ENCODE measurements at regions of chr1 and their contacts with region 1.

Region 1: DNA sequence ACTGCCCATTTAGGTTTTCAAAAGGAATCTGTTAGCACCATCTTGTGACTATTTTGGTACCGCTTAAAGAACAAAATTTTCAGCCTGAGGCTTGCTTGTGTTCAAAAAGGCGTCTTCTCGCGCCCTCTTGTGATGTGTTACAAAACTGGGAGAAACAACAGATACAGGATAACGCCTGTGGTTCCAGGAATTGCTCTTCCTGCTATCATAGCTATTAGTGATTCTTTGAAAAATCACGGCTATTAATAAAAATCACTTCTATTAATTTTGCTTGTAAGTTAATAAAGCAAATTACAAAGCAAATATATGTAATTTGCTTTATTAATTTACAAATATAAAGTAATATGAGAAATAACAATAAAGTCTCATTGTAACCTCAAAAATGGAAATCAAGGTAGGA is 82.2 kb upstream of the ABCD3 start:
- DNase-seq: peak; percentile 60
- ATAC-seq: peak; percentile 60
- H3K4me3 Mint-ChIP-seq: no peak overlapping the region
- H3K27ac Mint-ChIP-seq: no peak overlapping the region
- H3K4me1 Mint-ChIP-seq: peaks cover 13% of the 10 kb centered on the region
- H3K27me3 Mint-ChIP-seq: peaks cover 5% of the 10 kb centered on the region

Region 2: DNA sequence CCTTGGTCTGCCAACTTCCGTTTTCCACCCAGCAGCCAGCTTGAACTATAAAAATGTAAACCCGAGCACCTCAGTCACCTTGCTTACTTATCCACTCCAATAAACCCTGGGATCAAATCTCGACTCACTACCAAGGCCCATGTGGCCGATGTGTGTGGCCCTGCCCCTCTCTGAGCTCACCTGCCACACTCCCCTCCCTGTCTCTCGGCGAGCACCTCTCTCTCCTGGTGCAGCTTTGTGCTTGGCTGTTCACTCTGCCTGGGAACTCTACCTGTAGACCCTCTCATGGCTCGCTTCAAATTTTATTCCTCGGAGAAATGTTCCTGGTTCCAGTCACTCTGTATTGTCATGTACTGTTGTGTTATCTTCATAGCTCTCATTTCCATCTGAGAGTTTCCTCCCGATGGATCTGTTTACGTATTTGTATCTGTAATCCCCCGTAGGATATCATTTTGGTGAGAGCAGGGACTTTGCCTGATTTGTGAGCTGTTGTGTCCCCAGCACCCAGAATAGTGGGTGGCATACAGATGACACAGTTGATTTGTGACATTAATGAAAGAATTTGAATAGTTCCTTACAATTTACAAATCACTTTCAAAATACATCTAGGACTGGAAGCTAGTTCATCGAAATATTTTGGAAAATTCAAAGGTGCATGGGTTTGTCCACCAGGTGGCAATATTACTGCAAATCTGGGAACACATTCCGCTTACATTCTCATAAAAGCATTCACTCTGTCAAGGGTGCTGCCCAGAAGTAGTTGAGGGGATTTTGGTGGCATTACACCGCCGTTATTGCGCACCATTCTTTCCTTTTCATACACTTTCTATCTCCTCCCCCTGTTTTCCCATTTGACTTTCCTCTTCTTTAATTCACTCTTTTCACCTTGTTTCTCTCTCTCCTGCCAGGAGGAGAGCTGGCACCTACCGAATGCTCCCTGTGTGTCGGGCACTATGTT is 310.3 kb before region 1 on chr1:
- CTCF ChIA-PET with region 1: interaction called, 27 read pairs
- POLR2A ChIA-PET with region 1: no interaction called
- intact Hi-C with region 1: loop called in 1 of 2 experiments (anchors 5 kb)
- DNase-seq: no peak
- ATAC-seq: peak; percentile 30
- H3K4me3 Mint-ChIP-seq: no peak overlapping the region
- H3K27ac Mint-ChIP-seq: peak overlapping the region; percentile 44
- H3K4me1 Mint-ChIP-seq: peaks cover 2% of the 10 kb centered on the region
- H3K27me3 Mint-ChIP-seq: peaks cover 4% of the 10 kb centered on the region

Region 3: GRCh38 chr1:94045465-94046056 is 290.4 kb before region 1 on chr1:
- CTCF ChIA-PET with region 1: interaction called, 56 read pairs
- POLR2A ChIA-PET with region 1: no interaction called
- intact Hi-C with region 1: loop called (anchors 1 to 5 kb)
- DNase-seq: peak; percentile 69
- ATAC-seq: peak; percentile 85
- H3K4me3 Mint-ChIP-seq: peak overlapping the region; percentile 36
- H3K27ac Mint-ChIP-seq: no peak overlapping the region
- H3K4me1 Mint-ChIP-seq: peaks cover 2% of the 10 kb centered on the region
- H3K27me3 Mint-ChIP-seq: peaks cover 5% of the 10 kb centered on the region

Region 4: DNA sequence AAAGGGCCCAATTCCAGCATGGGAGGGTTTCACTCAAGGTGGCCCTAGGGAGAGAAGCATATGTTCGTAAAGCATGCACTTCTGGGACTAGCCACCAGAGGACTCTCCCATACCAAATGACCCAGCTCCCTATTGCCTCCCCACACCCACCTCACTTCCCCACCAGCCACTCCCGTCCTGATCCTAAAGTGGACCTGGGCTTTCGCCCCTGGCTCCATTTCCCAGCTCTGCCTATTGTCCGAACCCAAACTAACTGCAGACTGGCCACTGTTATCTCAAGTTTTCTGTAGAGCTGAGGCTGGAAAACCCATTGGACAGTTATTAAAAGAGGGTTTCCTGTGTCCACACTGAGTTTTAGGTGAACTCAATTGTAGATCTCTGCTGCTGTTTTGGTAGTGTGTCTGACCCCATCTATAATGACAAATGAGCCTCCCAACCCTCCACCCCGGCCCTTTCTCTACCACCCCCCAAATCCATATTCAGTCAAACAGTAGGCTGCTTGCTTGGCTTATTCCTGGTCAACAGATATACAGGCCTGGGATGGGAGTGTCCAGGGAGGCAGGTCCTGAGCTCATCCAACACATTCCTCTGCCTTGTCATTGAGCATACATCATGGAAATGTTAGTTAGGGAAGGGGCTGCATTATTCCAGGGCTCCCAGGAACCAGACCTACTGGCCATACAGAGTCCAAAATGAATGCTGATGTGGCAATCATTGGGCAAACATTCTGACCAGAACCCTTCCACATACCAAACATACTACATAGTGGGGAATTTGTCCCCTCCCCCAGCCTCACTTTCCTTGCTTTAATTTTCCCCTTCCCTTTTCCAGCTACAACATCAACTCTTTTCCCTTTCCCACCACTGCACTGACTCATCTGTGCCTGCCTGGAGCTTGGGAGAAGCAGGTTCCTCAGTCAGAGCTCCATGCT is 274.2 kb before region 1 on chr1:
- CTCF ChIA-PET with region 1: interaction called, 20 read pairs
- POLR2A ChIA-PET with region 1: interaction called, 4 read pairs
- intact Hi-C with region 1: loop called (anchors 1 kb)
- DNase-seq: peak; percentile 64
- ATAC-seq: no peak
- H3K4me3 Mint-ChIP-seq: no peak overlapping the region
- H3K27ac Mint-ChIP-seq: no peak overlapping the region
- H3K4me1 Mint-ChIP-seq: no peaks in the 10 kb centered on the region
- H3K27me3 Mint-ChIP-seq: peaks cover 9% of the 10 kb centered on the region

Region 5: DNA sequence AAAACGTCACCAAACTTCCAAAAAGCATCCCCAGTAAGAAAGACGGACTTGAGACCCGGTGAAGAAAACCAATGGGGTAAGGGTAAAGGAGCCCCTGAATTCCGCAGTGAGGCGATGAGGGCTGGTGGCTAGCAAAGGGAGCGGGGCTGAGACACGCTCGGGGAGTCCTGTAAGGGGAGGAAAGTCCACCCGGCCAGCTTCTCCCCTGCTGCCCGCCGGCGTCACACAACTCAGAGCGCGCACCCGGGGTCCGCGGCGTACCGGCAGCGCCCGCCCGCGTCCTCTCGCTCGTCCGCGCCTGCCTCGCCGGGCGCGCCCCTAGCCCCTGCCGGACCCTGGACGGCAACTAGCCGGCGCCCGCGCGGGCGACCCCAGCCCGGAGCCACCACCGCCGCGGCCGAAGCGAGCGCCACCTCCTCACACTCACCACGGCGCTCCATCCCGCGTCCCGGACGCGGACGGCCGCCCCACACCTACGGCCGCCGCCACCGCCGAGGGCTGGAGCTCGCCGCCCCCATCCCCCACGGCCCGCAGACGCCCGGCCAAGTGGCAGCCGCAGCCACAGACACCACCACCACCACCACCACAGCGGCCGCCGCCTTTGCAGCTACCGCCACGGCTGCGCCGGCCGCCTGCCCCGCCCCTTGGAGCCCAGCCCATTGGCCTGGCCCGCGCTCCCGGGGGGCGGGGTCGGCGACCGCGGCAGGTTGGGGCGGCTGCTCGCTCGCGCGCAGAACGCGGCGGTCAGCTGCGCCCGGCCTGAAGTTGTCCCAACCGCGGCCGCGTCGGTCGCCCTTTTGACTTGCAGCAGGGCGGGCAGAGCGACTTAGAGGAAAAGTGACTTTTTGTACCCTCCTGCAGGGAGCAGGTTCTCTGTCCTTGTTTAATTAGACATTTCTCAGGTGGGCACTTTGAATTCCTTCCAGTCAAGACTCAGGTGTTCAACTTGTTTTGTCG is 88.5 kb before region 1 on chr1:
- CTCF ChIA-PET with region 1: no interaction called
- POLR2A ChIA-PET with region 1: no interaction called
- intact Hi-C with region 1: loop called in 1 of 2 experiments (anchors 10 kb)
- DNase-seq: peak; percentile 52
- ATAC-seq: peak; percentile 80
- H3K4me3 Mint-ChIP-seq: peak overlapping the region; percentile 58
- H3K27ac Mint-ChIP-seq: no peak overlapping the region
- H3K4me1 Mint-ChIP-seq: peaks cover 11% of the 10 kb centered on the region
- H3K27me3 Mint-ChIP-seq: peaks cover 56% of the 10 kb centered on the region

Region 6: GRCh38 chr1:94258873-94259331 is 77.0 kb before region 1 on chr1:
- CTCF ChIA-PET with region 1: no interaction called
- POLR2A ChIA-PET with region 1: no interaction called
- intact Hi-C with region 1: no loop called
- DNase-seq: no peak
- ATAC-seq: no peak
- H3K4me3 Mint-ChIP-seq: no peak overlapping the region
- H3K27ac Mint-ChIP-seq: no peak overlapping the region
- H3K4me1 Mint-ChIP-seq: no peaks in the 10 kb centered on the region
- H3K27me3 Mint-ChIP-seq: peaks cover 26% of the 10 kb centered on the region

Region 7: GRCh38 chr1:94463765-94464330 is 127.9 kb after region 1 on chr1:
- CTCF ChIA-PET with region 1: interaction called, 22 read pairs
- POLR2A ChIA-PET with region 1: no interaction called
- intact Hi-C with region 1: loop called in 1 of 2 experiments (anchors 2 kb)
- DNase-seq: peak; percentile 13
- ATAC-seq: peak; percentile 61
- H3K4me3 Mint-ChIP-seq: no peak overlapping the region
- H3K27ac Mint-ChIP-seq: no peak overlapping the region
- H3K4me1 Mint-ChIP-seq: peaks cover 4% of the 10 kb centered on the region
- H3K27me3 Mint-ChIP-seq: no peaks in the 10 kb centered on the region